HEK293 (cell line): ENCODE measurements at regions of chr17 and their contacts with region 1.

Region 1: GRCh38 chr17:3865176-3865575 is 19.1 kb upstream of the NCBP3 start:
- H3K4me3 ChIP-seq: no peak overlapping the region
- H3K27ac ChIP-seq: no peak overlapping the region
- H3K4me1 ChIP-seq: no peaks in the 10 kb centered on the region
- CTCF ChIP-seq: no peak

Region 2: GRCh38 chr17:3827124-3827773 is 37.9 kb before region 1 on chr17:
- CTCF ChIA-PET with region 1: interaction called, 11 read pairs
- POLR2A ChIA-PET with region 1: no interaction called
- H3K4me3 ChIP-seq: no peak overlapping the region
- H3K27ac ChIP-seq: no peak overlapping the region
- H3K4me1 ChIP-seq: no peaks in the 10 kb centered on the region
- CTCF ChIP-seq: no peak

Region 3: GRCh38 chr17:3852561-3852960 is 12.6 kb before region 1 on chr17:
- CTCF ChIA-PET with region 1: interaction called, 68 read pairs
- POLR2A ChIA-PET with region 1: no interaction called
- H3K4me3 ChIP-seq: no peak overlapping the region
- H3K27ac ChIP-seq: no peak overlapping the region
- H3K4me1 ChIP-seq: no peaks in the 10 kb centered on the region
- CTCF ChIP-seq: no peak

Region 4: DNA sequence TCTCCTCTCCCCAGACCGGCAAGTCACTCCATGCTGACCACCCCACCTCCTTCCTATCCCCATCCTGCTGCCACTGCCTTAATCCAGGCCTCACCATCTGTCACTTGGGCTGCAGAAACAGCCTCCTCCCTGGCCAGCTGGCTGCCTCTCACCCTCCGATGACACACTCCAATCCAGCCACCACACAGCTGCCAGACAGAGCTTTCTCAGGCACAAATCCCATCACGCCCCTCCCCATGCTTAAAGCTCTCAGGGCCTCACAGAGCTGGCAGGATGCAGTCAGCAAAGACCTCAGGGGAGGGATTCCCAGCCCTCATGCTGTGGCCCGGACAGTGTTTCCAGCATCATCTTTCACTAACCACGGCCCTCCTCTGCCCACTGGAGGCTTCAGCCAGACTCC is 14.0 kb after region 1 on chr17:
- CTCF ChIA-PET with region 1: interaction called, 21 read pairs
- POLR2A ChIA-PET with region 1: no interaction called
- H3K4me3 ChIP-seq: no peak overlapping the region
- H3K27ac ChIP-seq: no peak overlapping the region
- H3K4me1 ChIP-seq: no peaks in the 10 kb centered on the region
- CTCF ChIP-seq: no peak

Region 5: GRCh38 chr17:3893003-3893719 is 28.0 kb after region 1 on chr17 and contains the start of gene CAMKK1:
- CTCF ChIA-PET with region 1: interaction called, 20 read pairs
- POLR2A ChIA-PET with region 1: no interaction called
- H3K4me3 ChIP-seq: peak within 1 kb of the TSS; percentile 56
- H3K27ac ChIP-seq: peak within 1 kb of the TSS; percentile 90
- H3K4me1 ChIP-seq: peaks cover 38% of the 10 kb centered on the region
- CTCF ChIP-seq: peak; percentile 30; the same call in 1 of the 2 replicates

Region 6: GRCh38 chr17:3907483-3908216 is 42.5 kb after region 1 on chr17:
- CTCF ChIA-PET with region 1: interaction called, 18 read pairs
- POLR2A ChIA-PET with region 1: no interaction called
- H3K4me3 ChIP-seq: no peak overlapping the region
- H3K27ac ChIP-seq: no peak overlapping the region
- H3K4me1 ChIP-seq: no peaks in the 10 kb centered on the region
- CTCF ChIP-seq: peak; percentile 68; the same call in 1 of the 2 replicates

Region 7: DNA sequence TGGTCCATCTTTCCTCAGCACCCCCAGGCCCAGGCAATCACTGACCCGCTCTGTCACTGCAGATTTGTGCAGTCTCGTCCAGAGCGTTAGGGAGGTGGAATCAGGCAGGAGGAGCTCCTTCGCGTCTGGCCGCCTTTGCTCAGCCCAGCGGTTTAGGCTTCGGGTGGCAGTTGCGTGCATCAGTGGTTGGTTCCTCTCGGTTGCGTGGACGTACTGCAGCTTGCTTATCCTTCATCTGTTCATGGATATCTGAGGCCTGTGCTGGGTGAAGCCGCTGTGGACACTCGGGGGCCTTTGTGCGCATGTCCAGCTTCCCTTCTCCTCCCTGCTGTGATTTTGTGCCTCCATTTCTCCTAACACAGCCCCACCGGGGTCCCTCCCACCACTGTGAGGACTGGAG is 55.8 kb after region 1 on chr17:
- CTCF ChIA-PET with region 1: no interaction called
- POLR2A ChIA-PET with region 1: no interaction called
- H3K4me3 ChIP-seq: no peak overlapping the region
- H3K27ac ChIP-seq: no peak overlapping the region
- H3K4me1 ChIP-seq: peaks cover 2% of the 10 kb centered on the region; the same call in 1 of the 2 replicates
- CTCF ChIP-seq: no peak

Region 8: GRCh38 chr17:3963237-3964201 is 98.3 kb after region 1 on chr17:
- CTCF ChIA-PET with region 1: no interaction called
- POLR2A ChIA-PET with region 1: no interaction called
- H3K4me3 ChIP-seq: no peak overlapping the region
- H3K27ac ChIP-seq: no peak overlapping the region
- H3K4me1 ChIP-seq: peaks cover 14% of the 10 kb centered on the region
- CTCF ChIP-seq: no peak

Region 9: DNA sequence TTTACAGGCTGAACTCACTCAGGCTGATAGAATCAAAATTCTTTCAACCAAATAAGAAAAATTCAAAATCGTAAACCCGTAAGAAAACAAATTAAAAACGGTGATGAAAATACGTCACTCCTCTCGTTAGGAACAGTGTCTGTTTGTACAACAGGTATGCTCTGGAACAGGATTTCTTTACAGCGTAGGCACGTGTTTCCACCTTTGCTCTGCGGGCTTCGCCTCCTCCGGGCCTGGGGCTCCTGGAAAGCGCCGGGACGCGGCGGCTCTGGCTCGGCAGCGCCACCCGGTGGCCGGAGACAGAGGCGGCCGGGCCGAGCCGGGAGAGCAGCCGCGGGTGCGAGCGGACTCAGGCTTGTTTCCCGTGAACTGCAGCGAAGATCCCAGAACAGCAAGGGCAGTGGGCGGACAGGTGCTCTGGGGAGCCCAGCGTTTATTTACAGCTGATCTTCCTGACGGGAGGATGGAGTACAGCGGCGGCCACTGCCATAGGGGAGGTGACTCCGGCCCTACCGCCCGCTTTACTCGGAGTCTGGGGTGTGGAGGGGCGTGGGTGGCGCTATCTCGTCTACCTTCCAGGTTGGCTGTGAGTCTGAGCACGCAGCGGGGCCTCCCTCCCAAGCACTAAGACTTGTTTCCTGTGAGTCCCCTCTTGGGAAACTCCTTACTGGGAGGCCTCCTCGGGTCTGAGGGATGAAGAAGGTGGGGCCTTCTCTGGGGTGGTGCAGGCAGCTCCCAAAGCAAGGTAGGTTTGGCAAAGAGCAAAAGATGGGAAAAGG is 139.5 kb after region 1 on chr17:
- CTCF ChIA-PET with region 1: interaction called, 29 read pairs
- POLR2A ChIA-PET with region 1: no interaction called
- H3K4me3 ChIP-seq: no peak overlapping the region
- H3K27ac ChIP-seq: no peak overlapping the region
- H3K4me1 ChIP-seq: no peaks in the 10 kb centered on the region
- CTCF ChIP-seq: peak; percentile 88